A673 (cell line): ENCODE measurements at regions of chr3 and their contacts with region 1.

Region 1: DNA sequence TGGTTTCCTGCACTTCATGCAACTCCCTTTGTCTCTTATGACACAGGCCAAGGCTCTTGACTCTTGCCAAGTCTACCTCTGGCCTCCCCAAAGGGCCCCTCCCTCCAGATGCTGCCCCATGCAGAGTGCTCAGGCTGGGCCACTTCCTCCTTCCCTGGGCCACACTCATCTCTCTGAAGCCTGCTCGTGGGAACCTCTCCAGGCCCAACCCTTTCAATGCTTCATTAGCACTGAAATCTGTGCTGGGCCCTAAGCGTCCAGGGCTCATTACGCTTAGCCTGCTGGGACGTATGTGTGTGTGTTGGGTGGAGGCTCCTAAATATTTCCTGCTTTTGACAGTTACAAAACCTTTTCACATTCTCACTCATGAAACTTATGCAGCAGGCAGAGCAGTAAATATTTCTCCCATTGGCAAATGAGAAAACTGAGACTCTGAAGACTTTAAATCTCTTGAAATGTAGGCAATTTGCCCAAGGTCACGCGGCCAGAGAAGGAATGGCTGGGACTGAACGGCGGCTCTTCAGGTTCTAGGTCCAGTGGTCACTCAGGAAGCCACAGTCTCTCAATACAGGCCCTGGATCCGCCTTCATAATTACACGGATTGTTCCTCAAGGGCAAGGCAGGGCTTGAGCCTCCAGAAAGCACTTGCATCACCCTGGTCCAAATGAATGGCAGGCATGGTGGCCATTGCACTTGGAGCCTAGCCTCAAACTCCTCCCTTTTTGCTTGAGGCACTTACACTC is 241.7 kb upstream of the HES1 start:
- DNase-seq: peak; percentile 92
- H3K4me3 ChIP-seq: no peak overlapping the region
- H3K27ac ChIP-seq: peak overlapping the region; percentile 100
- H3K4me1 ChIP-seq: peaks cover 55% of the 10 kb centered on the region
- H3K27me3 ChIP-seq: no peaks in the 10 kb centered on the region
- CTCF ChIP-seq: no peak

Region 2: GRCh38 chr3:193780810-193781472 is 113.4 kb before region 1 on chr3:
- CTCF ChIA-PET with region 1: interaction called, 15 read pairs
- POLR2A ChIA-PET with region 1: interaction called, 4 read pairs
- intact Hi-C with region 1: loop called (anchors 2 kb)
- DNase-seq: peak; percentile 95
- H3K4me3 ChIP-seq: no peak overlapping the region
- H3K27ac ChIP-seq: peak overlapping the region; percentile 86
- H3K4me1 ChIP-seq: peaks cover 90% of the 10 kb centered on the region
- H3K27me3 ChIP-seq: no peaks in the 10 kb centered on the region
- CTCF ChIP-seq: peak; percentile 95

Region 3: GRCh38 chr3:193843474-193844301 is 50.6 kb before region 1 on chr3:
- CTCF ChIA-PET with region 1: no interaction called
- POLR2A ChIA-PET with region 1: interaction called, 14 read pairs
- intact Hi-C with region 1: no loop called
- DNase-seq: no peak
- H3K4me3 ChIP-seq: no peak overlapping the region
- H3K27ac ChIP-seq: no peak overlapping the region
- H3K4me1 ChIP-seq: peaks cover 5% of the 10 kb centered on the region
- H3K27me3 ChIP-seq: no peaks in the 10 kb centered on the region
- CTCF ChIP-seq: no peak

Region 4: DNA sequence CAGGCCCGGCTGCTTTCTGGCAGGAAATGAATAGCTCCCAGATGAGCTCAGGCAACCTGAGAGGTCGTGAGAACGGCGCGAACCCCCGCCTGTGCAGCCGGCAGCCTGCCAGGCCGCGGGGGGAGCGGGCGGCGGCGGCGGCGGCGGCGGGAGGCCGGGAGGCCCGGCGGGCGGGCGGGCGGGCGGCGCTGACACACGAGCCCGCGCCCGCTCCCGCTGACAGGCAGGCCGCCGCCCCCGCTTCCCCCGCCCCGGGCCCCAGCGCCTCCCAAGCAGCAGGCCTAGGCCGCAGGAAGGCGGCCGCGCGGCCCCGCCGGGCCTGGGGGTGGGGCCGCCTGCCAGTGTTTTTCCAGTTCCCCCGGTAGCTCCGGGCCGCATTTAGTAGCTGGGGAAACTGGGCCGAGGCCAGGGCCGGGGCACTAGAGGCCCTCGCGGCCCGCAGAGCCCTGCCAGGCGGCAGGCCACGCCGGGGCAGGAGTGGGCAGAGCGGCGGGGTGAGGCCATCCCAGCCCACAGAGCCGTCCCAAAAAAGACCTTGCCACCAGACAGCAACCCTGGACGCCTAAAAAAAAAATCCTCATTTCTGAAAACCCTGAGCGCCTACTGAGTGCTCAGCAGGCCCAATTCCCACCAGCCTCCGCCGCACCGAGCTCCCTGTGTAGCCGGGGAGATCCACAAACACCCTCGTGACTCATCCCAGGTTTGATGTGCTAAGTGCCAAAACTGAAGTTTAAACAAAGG is 247.3 kb after region 1 on chr3:
- CTCF ChIA-PET with region 1: interaction called, 10 read pairs
- POLR2A ChIA-PET with region 1: interaction called, 23 read pairs
- intact Hi-C with region 1: loop called (anchors 1 kb)
- DNase-seq: peak; percentile 93
- H3K4me3 ChIP-seq: peak overlapping the region; percentile 93
- H3K27ac ChIP-seq: peak overlapping the region; percentile 98
- H3K4me1 ChIP-seq: peaks cover 26% of the 10 kb centered on the region
- H3K27me3 ChIP-seq: no peaks in the 10 kb centered on the region
- CTCF ChIP-seq: no peak

Region 5: DNA sequence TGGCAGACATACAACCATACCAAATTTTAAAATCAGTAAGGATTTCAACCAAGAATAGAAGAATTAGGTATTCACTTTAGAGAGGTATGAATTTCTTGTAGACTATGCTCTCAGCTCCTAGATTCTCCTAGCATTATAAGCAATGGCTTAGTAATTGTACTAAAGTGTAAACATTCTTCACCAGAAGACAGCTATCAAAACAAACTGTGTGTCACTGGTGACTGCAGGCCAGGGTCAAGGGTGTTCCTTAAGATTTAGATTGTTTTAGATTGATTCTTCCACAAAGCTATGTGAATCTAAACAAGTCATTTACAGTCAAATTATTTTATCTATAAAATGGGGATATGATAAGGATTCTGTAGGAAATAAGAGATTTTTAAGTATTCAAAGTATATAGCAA is 527.9 kb after region 1 on chr3:
- CTCF ChIA-PET with region 1: no interaction called
- POLR2A ChIA-PET with region 1: no interaction called
- intact Hi-C with region 1: no loop called
- DNase-seq: no peak
- H3K4me3 ChIP-seq: no peak overlapping the region
- H3K27ac ChIP-seq: no peak overlapping the region
- H3K4me1 ChIP-seq: no peaks in the 10 kb centered on the region
- H3K27me3 ChIP-seq: no peaks in the 10 kb centered on the region
- CTCF ChIP-seq: no peak

Region 6: DNA sequence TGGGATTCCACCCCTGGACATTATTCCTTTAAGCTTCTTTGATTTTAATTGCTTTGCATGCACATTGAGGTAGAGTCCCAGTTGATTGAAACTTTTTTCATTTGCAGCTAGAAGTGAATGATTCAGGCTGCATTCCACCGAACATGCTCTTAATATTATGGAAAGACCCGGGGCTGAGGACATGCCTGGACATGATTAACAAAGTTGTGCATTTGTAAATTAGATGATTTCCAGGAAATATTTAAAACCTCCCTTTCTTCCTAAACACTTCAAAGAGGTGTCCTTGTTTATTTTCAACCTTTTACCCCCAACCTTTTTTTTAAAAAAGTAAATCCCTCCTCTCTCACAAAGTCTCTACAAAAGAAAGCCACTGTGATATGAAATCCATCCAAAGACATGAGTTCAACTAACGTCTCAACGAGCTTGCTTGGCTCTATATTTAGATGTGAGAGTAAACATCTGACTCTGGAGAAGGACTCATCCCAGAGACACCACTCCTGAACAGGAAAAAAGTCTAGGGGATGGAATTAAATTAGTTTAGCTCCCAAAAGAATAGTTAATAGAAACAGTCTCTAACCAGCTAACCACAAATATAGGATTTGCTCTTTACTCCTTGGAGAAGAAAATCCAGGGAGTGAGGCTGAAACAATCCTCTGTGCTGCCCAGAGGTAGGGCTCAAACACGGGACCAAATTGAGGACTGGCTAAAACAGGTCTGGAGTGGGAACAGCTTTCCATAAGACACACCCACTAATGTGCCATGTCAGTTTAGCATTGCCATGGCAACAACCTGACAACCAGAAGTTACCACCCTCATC is 1293.5 kb after region 1 on chr3:
- CTCF ChIA-PET with region 1: no interaction called
- POLR2A ChIA-PET with region 1: no interaction called
- intact Hi-C with region 1: loop called (anchors 5 kb)
- DNase-seq: peak; percentile 54
- H3K4me3 ChIP-seq: no peak overlapping the region
- H3K27ac ChIP-seq: peak overlapping the region; percentile 83
- H3K4me1 ChIP-seq: peaks cover 67% of the 10 kb centered on the region
- H3K27me3 ChIP-seq: no peaks in the 10 kb centered on the region
- CTCF ChIP-seq: no peak